AG04450 (cell line): ENCODE measurements at regions of chr10 and their contacts with region 1.

Region 1: GRCh38 chr10:35421553-35422178 is 85.4 kb downstream of the CCNY start:
- DNase-seq: peak; percentile 80
- H3K4me3 ChIP-seq: peak overlapping the region; percentile 26
- H3K27ac ChIP-seq: peak overlapping the region; percentile 87
- H3K27me3 ChIP-seq: no peaks in the 10 kb centered on the region
- CTCF ChIP-seq: no peak

Region 2: GRCh38 chr10:35355971-35356724 is 65.5 kb before region 1 on chr10:
- CTCF ChIA-PET with region 1: no interaction called
- POLR2A ChIA-PET with region 1: no interaction called
- DNase-seq: no peak
- H3K4me3 ChIP-seq: no peak overlapping the region
- H3K27ac ChIP-seq: no peak overlapping the region
- H3K27me3 ChIP-seq: no peaks in the 10 kb centered on the region
- CTCF ChIP-seq: no peak

Region 3: DNA sequence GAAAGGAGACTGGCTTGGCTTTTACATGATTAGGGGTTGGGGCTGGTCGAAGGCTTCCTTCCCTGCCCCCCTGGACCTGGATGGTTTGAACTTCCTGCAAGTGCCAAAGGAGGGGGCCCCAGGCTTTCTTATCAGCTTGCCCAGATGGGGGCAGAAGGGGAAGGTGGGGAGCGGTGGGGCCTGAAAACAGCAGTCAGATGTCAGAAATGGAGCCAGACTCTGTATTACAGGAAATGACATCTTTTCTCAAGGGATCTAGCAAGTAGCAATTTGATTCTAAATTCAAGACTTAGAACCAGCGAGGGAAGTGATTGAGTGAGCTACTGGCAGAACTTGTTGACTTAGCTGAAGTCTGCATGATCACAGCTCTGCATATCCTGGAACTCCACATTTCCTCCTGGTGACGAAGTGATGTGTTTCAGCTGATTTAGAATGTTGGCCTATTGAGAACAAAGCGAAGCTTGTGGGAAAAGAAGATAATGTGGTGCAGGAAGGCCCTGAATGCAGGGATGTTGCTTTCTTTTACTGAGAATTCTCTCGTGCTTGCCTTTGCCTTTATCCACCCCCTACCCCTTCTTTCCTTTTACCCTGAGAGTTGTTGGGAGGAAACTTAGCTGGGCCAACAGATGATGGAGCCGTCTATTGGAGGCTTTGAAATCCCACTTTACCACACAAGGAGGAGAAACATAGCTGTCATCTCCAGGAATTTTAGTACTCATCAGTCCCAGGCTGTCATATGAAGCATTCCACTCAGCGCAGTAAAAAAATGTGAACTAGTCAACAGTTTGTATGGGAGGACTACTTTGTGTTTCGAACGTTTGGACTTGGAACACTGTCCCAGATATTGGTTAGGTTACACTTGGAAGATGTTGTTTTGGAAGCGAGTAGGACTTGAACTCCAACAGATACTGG is 42.2 kb before region 1 on chr10:
- CTCF ChIA-PET with region 1: no interaction called
- POLR2A ChIA-PET with region 1: no interaction called
- DNase-seq: peak; percentile 41
- H3K4me3 ChIP-seq: no peak overlapping the region
- H3K27ac ChIP-seq: peak overlapping the region; percentile 59
- H3K27me3 ChIP-seq: no peaks in the 10 kb centered on the region
- CTCF ChIP-seq: no peak

Region 4: DNA sequence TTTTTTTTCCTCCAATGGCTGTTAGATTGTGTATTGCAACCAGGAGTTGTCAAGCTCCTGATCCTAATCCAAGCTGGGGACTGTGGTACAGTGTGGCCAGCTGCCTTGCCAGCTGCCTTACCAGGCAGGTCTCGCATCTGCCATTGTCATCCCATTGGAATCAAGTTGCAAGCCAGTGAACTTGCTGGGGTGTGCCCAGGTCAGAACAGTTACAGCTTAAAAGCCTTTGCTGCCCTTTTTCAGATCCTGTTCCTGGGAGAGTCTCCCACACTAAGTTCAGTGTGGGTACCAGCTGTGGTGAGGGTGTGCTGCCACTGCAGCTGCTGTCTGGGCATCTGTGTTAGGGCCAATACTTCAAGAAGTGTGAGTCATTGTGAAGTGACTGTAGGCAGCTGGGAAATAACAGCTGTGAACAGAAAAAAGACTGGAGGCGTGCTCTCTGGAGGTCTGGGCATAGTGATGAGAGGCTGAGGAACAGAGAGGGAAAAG is 12.5 kb before region 1 on chr10:
- CTCF ChIA-PET with region 1: interaction called, 4 read pairs
- POLR2A ChIA-PET with region 1: interaction called, 10 read pairs
- DNase-seq: peak; percentile 68
- H3K4me3 ChIP-seq: no peak overlapping the region
- H3K27ac ChIP-seq: peak overlapping the region; percentile 25
- H3K27me3 ChIP-seq: no peaks in the 10 kb centered on the region
- CTCF ChIP-seq: no peak

Region 5: GRCh38 chr10:35546824-35547273 is 125.2 kb after region 1 on chr10:
- CTCF ChIA-PET with region 1: no interaction called
- POLR2A ChIA-PET with region 1: no interaction called
- DNase-seq: no peak
- H3K4me3 ChIP-seq: no peak overlapping the region
- H3K27ac ChIP-seq: no peak overlapping the region
- H3K27me3 ChIP-seq: no peaks in the 10 kb centered on the region
- CTCF ChIP-seq: 0 out of 2 replicates have a peak, but pooled peaks have one; percentile 17